ENCODE measurements at regions of chr11 and their contacts with region 1.

Region 1: DNA sequence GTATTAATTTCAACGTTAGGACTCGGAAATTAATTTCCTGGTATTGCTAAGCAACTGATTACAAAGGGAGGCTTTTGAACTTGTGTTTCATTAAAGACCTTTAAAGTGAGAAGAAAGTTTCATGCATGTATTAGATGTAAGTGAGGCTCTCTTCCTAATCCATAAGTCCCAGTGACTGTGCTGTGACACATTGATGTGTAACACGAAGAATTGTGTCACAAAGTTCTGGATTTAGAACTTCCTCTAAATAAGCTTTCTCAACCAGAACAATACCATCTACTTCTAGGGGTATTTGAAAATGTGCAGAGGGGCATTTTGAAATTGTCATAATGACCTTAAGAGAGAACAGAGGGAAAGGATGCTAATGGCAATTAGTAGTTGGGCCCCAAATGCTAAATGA is 14.4 kb downstream of the DCUN1D5 start:
- DNase-seq: no peak
- H3K4me3 ChIP-seq: no peak overlapping the region
- H3K27ac ChIP-seq: no peak overlapping the region
- H3K4me1 ChIP-seq: no peaks in the 10 kb centered on the region
- H3K27me3 ChIP-seq: no peaks in the 10 kb centered on the region
- CTCF ChIP-seq: no peak
- EP300 ChIP-seq: no peak
- POLR2A ChIP-seq: no peak
- RAD21 ChIP-seq: no peak

Region 2: DNA sequence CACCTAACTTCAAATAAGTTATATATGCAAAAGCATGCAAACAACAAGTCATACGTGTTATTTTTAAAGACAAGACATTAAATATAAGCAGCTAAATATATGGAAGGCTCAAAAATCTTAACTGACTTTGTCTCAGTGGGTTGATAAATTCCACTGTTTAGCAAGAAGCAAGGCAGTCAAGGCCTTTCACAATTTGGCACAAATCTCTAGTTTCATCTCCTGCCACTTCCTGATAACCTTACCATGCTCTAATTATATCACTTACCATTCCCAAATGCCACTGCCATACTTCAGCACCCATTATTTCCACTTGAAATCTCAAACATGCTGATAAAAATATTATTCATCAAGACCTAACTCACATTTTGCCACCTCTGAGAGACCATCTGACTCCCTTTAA is 10.4 kb before region 1 on chr11:
- CTCF ChIA-PET with region 1: no interaction called
- POLR2A ChIA-PET with region 1: interaction called, 12 read pairs
- DNase-seq: no peak
- H3K4me3 ChIP-seq: no peak overlapping the region
- H3K27ac ChIP-seq: no peak overlapping the region
- H3K4me1 ChIP-seq: peaks cover 0 to 3% (median 0%) of the 10 kb centered on the region in 4 experiments; a peak in 1 of 7 replicates
- H3K27me3 ChIP-seq: peaks cover 0 to 1% (median 0%) of the 10 kb centered on the region in 4 experiments; a peak in 1 of 7 replicates
- CTCF ChIP-seq: no peak
- EP300 ChIP-seq: no peak
- POLR2A ChIP-seq: no peak
- RAD21 ChIP-seq: no peak

Measured in H1 (cell line).